PC-9 (cell line): ENCODE measurements at regions of chr7 and their contacts with region 1.

Region 1: DNA sequence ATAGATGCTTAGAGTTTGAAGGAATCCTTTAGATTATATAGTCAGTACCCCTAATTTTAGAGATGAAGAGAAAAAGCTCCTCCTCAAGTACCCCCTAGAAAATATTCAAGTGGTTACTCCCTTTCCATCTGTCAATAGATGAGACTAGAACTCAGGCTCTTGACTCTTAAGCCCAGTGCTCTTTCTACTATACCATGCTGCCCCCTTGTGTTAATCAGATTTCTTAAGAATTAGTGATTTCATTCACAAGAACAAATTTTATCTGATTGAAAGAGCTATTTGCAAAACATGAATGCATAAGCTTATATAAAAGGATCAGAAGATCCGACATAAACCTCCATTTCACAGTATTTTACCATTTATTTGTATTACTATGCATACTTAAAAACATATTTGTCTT is 179.3 kb downstream of the TFEC start:
- DNase-seq: peak in 1 of 2 experiments; percentile 37
- H3K4me3 ChIP-seq: no peak overlapping the region
- H3K27ac ChIP-seq: no peak overlapping the region
- H3K4me1 ChIP-seq: no peaks in the 10 kb centered on the region
- H3K27me3 ChIP-seq: no peaks in the 10 kb centered on the region
- CTCF ChIP-seq: peak; percentile 82

Region 2: GRCh38 chr7:114026486-114027089 is 1824.7 kb before region 1 on chr7:
- CTCF ChIA-PET with region 1: interaction called, 4 read pairs
- POLR2A ChIA-PET with region 1: no interaction called
- intact Hi-C with region 1: loop called (anchors 2 kb)
- DNase-seq: no peak
- H3K4me3 ChIP-seq: no peak overlapping the region
- H3K27ac ChIP-seq: no peak overlapping the region
- H3K4me1 ChIP-seq: no peaks in the 10 kb centered on the region
- H3K27me3 ChIP-seq: no peaks in the 10 kb centered on the region
- CTCF ChIP-seq: peak; percentile 76

Region 3: GRCh38 chr7:114426382-114427223 is 1424.7 kb before region 1 on chr7:
- CTCF ChIA-PET with region 1: interaction called, 6 read pairs
- POLR2A ChIA-PET with region 1: no interaction called
- intact Hi-C with region 1: loop called (anchors 5 kb)
- DNase-seq: no peak
- H3K4me3 ChIP-seq: no peak overlapping the region
- H3K27ac ChIP-seq: no peak overlapping the region
- H3K4me1 ChIP-seq: no peaks in the 10 kb centered on the region
- H3K27me3 ChIP-seq: no peaks in the 10 kb centered on the region
- CTCF ChIP-seq: peak; percentile 43; the same call in 1 of the 2 replicates

Region 4: GRCh38 chr7:114865564-114865963 is 985.7 kb before region 1 on chr7:
- CTCF ChIA-PET with region 1: interaction called, 6 read pairs
- POLR2A ChIA-PET with region 1: no interaction called
- intact Hi-C with region 1: loop called (anchors 2 kb)
- DNase-seq: peak in 1 of 2 experiments; percentile 35
- H3K4me3 ChIP-seq: no peak overlapping the region
- H3K27ac ChIP-seq: no peak overlapping the region
- H3K4me1 ChIP-seq: no peaks in the 10 kb centered on the region
- H3K27me3 ChIP-seq: no peaks in the 10 kb centered on the region
- CTCF ChIP-seq: peak; percentile 69

Region 5: GRCh38 chr7:115869225-115869624 is 17.9 kb after region 1 on chr7:
- CTCF ChIA-PET with region 1: interaction called, 10 read pairs
- POLR2A ChIA-PET with region 1: no interaction called
- intact Hi-C with region 1: no loop called
- DNase-seq: no peak
- H3K4me3 ChIP-seq: no peak overlapping the region
- H3K27ac ChIP-seq: no peak overlapping the region
- H3K4me1 ChIP-seq: no peaks in the 10 kb centered on the region
- H3K27me3 ChIP-seq: no peaks in the 10 kb centered on the region
- CTCF ChIP-seq: no peak

Region 6: GRCh38 chr7:115910541-115911164 is 59.4 kb after region 1 on chr7:
- CTCF ChIA-PET with region 1: no interaction called
- POLR2A ChIA-PET with region 1: no interaction called
- intact Hi-C with region 1: no loop called
- DNase-seq: peak in 1 of 2 experiments; percentile 54
- H3K4me3 ChIP-seq: no peak overlapping the region
- H3K27ac ChIP-seq: no peak overlapping the region
- H3K4me1 ChIP-seq: no peaks in the 10 kb centered on the region; the same call in 1 of the 2 replicates
- H3K27me3 ChIP-seq: no peaks in the 10 kb centered on the region
- CTCF ChIP-seq: peak; percentile 66; the same call in 1 of the 2 replicates

Region 7: DNA sequence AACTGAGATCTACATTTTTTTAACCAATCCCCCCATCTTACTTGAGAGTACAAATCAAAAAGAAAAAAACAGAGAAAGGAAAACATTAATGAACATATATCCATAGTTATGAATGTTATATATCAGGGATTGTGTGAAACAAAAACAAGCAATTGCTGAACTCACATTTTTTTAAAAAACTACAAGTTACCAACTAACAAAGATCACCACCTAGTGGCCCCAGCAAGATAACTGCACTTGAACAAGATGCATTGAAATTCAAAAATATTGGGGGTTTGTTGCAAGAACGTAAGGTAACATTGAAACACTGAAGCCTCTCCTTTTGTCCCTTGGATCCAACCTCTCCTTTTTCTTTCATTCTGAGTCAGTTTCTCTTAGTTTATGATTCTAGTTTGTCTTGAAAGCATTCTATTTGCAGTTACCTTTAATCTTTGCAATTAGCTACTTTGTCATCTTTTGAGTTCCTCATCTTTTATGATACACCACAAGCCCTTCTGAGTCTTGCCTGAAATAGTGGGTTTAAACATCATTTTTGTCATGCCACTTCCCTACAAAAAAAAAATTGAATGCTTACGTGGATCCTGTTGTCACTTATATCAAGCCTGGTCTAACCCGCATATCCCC is 271.8 kb after region 1 on chr7:
- CTCF ChIA-PET with region 1: no interaction called
- POLR2A ChIA-PET with region 1: no interaction called
- intact Hi-C with region 1: loop called (anchors 1 kb)
- DNase-seq: peak in 1 of 2 experiments; percentile 12
- H3K4me3 ChIP-seq: no peak overlapping the region
- H3K27ac ChIP-seq: no peak overlapping the region
- H3K4me1 ChIP-seq: no peaks in the 10 kb centered on the region
- H3K27me3 ChIP-seq: no peaks in the 10 kb centered on the region
- CTCF ChIP-seq: peak; percentile 77

Region 8: GRCh38 chr7:116138202-116138801 is 287.0 kb after region 1 on chr7:
- CTCF ChIA-PET with region 1: no interaction called
- POLR2A ChIA-PET with region 1: interaction called, 12 read pairs
- intact Hi-C with region 1: no loop called
- DNase-seq: peak; percentile 24 to 43
- H3K4me3 ChIP-seq: no peak overlapping the region
- H3K27ac ChIP-seq: no peak overlapping the region
- H3K4me1 ChIP-seq: no peaks in the 10 kb centered on the region
- H3K27me3 ChIP-seq: no peaks in the 10 kb centered on the region
- CTCF ChIP-seq: peak; percentile 82